ENCODE measurements at regions of chr6 and their contacts with region 1.

Region 1: DNA sequence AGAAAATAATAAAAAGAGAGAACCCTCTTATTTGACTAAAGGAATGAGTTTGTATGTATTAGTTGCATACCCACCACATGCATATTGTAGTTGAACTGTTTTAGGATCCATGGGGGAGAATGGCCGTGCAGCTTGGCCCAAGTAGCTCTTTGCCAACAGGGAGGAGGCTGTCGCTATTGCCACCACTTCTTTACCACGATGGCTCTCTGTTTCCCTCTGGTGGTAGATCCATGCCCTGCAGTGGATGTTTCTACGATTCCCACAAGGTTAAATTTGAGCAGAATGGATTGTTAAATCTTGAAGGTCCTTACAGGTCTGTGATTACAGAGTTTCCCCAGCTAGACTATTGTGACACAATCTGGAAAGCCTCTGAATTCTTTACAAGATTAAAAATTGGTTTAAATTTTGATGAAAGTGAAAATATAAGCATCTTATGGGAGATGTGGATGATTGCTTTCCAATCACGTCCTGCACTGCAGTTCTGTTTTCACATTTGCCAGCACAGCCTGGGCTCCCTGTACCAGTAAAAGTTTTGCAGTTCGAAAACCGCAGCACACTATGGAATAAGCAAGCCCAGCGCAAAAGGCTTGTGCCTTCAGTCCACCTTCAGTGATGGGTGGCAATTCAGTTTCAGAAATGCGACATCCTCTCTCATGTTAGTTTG is 34.4 kb upstream of the FNDC1 start:
- DNase-seq: peak; percentile 63 to 86 (median 78)
- ATAC-seq: peak; percentile 96
- H3K4me3 ChIP-seq: no peak overlapping the region
- H3K4me3 Mint-ChIP-seq: no peak overlapping the region
- H3K27ac ChIP-seq: no peak overlapping the region
- H3K27ac Mint-ChIP-seq: no peak overlapping the region
- H3K4me1 ChIP-seq: no peaks in the 10 kb centered on the region
- H3K4me1 Mint-ChIP-seq: no peaks in the 10 kb centered on the region
- H3K27me3 ChIP-seq: no peaks in the 10 kb centered on the region
- H3K27me3 Mint-ChIP-seq: no peaks in the 10 kb centered on the region
- CTCF ChIP-seq: peak; percentile 96

Region 2: DNA sequence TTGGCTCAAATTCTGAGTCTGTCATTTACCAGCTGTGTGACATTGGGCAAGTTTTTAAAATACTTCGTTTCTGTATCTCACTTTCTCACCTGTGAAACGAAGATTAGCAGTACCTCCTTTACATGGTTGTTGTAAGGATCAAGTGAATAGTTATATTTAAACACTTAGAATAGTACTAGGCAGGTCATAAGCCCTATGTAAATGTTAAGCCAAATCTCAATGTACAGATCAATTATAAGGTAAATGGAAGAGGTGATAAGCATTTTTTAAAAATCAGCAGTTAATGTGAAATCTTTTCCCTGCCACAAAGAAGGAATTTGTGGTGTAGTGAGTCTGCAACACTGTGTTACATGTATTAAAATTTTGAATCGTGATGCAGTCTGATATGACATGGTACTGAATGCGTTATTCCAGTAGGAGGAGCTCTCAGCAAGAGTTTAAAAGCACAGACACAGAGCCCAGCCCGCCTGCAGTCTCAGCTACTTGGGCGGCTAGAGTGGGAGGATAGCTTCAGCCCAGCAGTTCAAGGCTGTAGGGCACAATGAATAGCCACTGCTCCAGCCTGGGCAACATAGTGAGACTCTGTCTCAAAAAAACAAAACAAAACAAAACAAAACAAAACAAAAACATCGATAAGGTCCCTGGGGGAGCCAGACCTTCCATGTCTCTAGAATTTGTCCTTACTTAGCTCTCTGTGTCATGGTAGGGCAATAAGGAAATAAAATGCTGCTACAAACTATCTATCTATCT is 920.7 kb before region 1 on chr6:
- CTCF ChIA-PET with region 1: no interaction called
- POLR2A ChIA-PET with region 1: no interaction called
- intact Hi-C with region 1: loop called (anchors 5 to 10 kb)
- DNase-seq: peak; percentile 9 to 77 (median 46)
- ATAC-seq: peak; percentile 99
- H3K4me3 ChIP-seq: no peak overlapping the region
- H3K4me3 Mint-ChIP-seq: no peak overlapping the region
- H3K27ac ChIP-seq: no peak overlapping the region
- H3K27ac Mint-ChIP-seq: no peak overlapping the region
- H3K4me1 ChIP-seq: no peaks in the 10 kb centered on the region
- H3K4me1 Mint-ChIP-seq: no peaks in the 10 kb centered on the region
- H3K27me3 ChIP-seq: no peaks in the 10 kb centered on the region
- H3K27me3 Mint-ChIP-seq: no peaks in the 10 kb centered on the region
- CTCF ChIP-seq: peak; percentile 84

Region 3: GRCh38 chr6:158769771-158770432 is 364.9 kb before region 1 on chr6:
- CTCF ChIA-PET with region 1: interaction called, 3 read pairs
- POLR2A ChIA-PET with region 1: no interaction called
- intact Hi-C with region 1: loop called in 1 of 2 experiments (anchors 10 kb)
- DNase-seq: peak in 1 of 9 experiments; percentile 35
- ATAC-seq: no peak
- H3K4me3 ChIP-seq: no peak overlapping the region
- H3K4me3 Mint-ChIP-seq: peak overlapping the region; percentile 9
- H3K27ac ChIP-seq: peak overlapping the region in 1 of 2 experiments; percentile 40
- H3K27ac Mint-ChIP-seq: peak overlapping the region; percentile 3
- H3K4me1 ChIP-seq: peaks cover 36% of the 10 kb centered on the region
- H3K4me1 Mint-ChIP-seq: peaks cover 45% of the 10 kb centered on the region
- H3K27me3 ChIP-seq: no peaks in the 10 kb centered on the region
- H3K27me3 Mint-ChIP-seq: no peaks in the 10 kb centered on the region
- CTCF ChIP-seq: no peak

Region 4: GRCh38 chr6:158999666-159000403 is 135.0 kb before region 1 on chr6 and contains the start of gene RSPH3:
- CTCF ChIA-PET with region 1: interaction called, 497 read pairs
- POLR2A ChIA-PET with region 1: interaction called, 3 read pairs
- intact Hi-C with region 1: no loop called
- DNase-seq: peak; percentile 62 to 93 (median 87)
- ATAC-seq: peak; percentile 85
- H3K4me3 ChIP-seq: peak within 1 kb of the TSS; percentile 91 to 95
- H3K4me3 Mint-ChIP-seq: peak within 1 kb of the TSS; percentile 95
- H3K27ac ChIP-seq: peak within 1 kb of the TSS; percentile 65 to 73
- H3K27ac Mint-ChIP-seq: peak within 1 kb of the TSS; percentile 88
- H3K4me1 ChIP-seq: peaks cover 18% of the 10 kb centered on the region
- H3K4me1 Mint-ChIP-seq: peaks cover 22% of the 10 kb centered on the region
- H3K27me3 ChIP-seq: no peaks in the 10 kb centered on the region
- H3K27me3 Mint-ChIP-seq: no peaks in the 10 kb centered on the region
- CTCF ChIP-seq: no peak
- total RNA-seq, gene RSPH3: 0.52 to 0.83 TPM

Region 5: DNA sequence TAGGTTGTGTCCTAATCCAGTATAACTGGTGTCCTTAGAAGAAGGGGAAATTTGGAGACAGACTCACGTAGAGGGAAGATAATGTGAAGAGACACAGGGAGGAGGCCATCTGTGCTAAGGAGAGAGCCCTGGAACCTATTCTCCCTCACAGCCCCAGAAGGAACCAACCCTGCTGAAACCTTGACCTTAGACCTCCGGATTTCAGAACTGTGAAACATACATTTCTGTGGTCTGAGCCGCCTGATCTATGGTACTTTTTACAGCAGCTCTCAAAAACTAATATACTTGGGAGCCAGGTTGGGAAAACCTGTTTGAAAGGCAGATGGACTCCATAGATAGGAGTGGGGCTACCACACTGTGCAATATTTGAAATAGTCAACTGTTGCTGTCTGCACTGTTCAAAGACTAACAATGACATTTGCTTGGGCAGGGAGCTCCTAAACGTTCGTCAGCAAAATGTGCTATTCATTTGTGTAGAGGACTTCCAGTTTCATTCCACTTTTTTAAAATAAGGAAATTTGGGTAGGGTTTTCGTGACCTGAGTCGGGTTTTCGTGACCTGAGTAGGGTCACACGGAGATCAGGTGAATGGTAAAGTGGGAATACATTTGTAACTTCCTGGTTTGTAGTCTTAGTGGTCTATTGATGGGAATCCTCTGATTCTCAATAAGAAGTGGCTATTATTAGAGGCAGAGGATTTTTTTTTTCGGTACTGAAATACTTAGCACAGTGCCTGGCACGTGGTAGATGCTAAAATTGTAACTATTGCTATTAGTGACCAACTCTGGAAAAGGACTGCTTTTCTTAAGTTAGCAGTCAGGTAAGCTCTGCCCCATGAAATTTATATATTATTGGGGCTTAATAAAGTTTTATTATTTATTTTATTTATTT is 101.4 kb before region 1 on chr6:
- CTCF ChIA-PET with region 1: interaction called, 24 read pairs
- POLR2A ChIA-PET with region 1: no interaction called
- intact Hi-C with region 1: no loop called
- DNase-seq: no peak
- ATAC-seq: no peak
- H3K4me3 ChIP-seq: no peak overlapping the region
- H3K4me3 Mint-ChIP-seq: no peak overlapping the region
- H3K27ac ChIP-seq: peak overlapping the region in 1 of 2 experiments; percentile 10
- H3K27ac Mint-ChIP-seq: peak overlapping the region; percentile 80
- H3K4me1 ChIP-seq: peaks cover 15% of the 10 kb centered on the region
- H3K4me1 Mint-ChIP-seq: peaks cover 31% of the 10 kb centered on the region
- H3K27me3 ChIP-seq: no peaks in the 10 kb centered on the region
- H3K27me3 Mint-ChIP-seq: no peaks in the 10 kb centered on the region
- CTCF ChIP-seq: no peak

Region 6: DNA sequence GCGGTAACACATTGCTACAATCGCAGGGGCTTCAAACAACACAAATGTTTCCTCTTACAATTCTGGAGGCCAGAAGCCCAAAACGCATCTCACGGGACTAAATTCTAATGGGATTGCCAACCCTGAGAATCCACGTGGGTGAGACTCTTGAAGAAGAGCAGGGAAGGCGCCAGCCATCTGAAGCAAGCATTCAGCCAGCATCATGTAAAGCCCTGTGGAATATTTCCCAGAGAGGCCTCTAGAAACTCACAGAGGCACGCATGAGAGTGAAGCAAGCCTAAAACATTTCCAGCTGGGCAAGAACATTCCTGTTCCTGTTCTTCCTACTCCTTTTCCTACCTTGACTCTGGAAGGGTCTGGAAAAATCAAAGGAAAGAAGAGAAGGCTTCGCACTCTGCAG is 14.8 kb after region 1 on chr6:
- CTCF ChIA-PET with region 1: interaction called, 49 read pairs
- POLR2A ChIA-PET with region 1: no interaction called
- intact Hi-C with region 1: no loop called
- DNase-seq: no peak
- ATAC-seq: no peak
- H3K4me3 ChIP-seq: no peak overlapping the region
- H3K4me3 Mint-ChIP-seq: no peak overlapping the region
- H3K27ac ChIP-seq: no peak overlapping the region
- H3K27ac Mint-ChIP-seq: no peak overlapping the region
- H3K4me1 ChIP-seq: peaks cover 5% of the 10 kb centered on the region
- H3K4me1 Mint-ChIP-seq: peaks cover 2% of the 10 kb centered on the region
- H3K27me3 ChIP-seq: no peaks in the 10 kb centered on the region
- H3K27me3 Mint-ChIP-seq: peaks cover 9% of the 10 kb centered on the region
- CTCF ChIP-seq: no peak

Region 7: GRCh38 chr6:159298840-159299239 is 164.0 kb after region 1 on chr6:
- CTCF ChIA-PET with region 1: no interaction called
- POLR2A ChIA-PET with region 1: no interaction called
- intact Hi-C with region 1: no loop called
- DNase-seq: no peak
- ATAC-seq: no peak
- H3K4me3 ChIP-seq: no peak overlapping the region
- H3K4me3 Mint-ChIP-seq: no peak overlapping the region
- H3K27ac ChIP-seq: no peak overlapping the region
- H3K27ac Mint-ChIP-seq: no peak overlapping the region
- H3K4me1 ChIP-seq: no peaks in the 10 kb centered on the region
- H3K4me1 Mint-ChIP-seq: no peaks in the 10 kb centered on the region
- H3K27me3 ChIP-seq: no peaks in the 10 kb centered on the region
- H3K27me3 Mint-ChIP-seq: peaks cover 36% of the 10 kb centered on the region
- CTCF ChIP-seq: no peak

Measured in CD8-positive, alpha-beta T cell (primary cell).